CD8-positive, alpha-beta memory T cell (primary cell): ENCODE measurements at regions of chr1 and their contacts with region 1.

Region 1: DNA sequence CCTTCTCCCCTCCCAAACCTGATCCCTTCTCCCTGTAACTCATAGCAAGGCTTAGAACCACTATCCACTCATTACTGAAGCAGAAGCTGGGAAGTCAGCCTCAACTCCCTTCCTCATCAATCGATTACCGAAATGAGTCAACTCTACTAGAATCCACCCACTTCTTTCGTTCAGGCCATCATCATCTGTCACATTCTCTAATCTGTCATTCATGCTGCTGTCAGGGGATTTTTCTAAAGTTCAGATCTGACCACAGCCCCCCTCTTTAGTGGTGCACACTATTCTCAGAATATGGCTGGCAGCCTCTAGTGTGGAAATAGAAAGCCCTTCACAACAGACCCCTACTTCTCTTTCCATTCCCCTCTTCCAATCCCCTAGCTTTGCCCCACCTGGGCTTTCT is 5.1 kb downstream of the NT5C1A start:
- DNase-seq: no peak
- H3K4me3 ChIP-seq: no peak overlapping the region
- H3K4me3 Mint-ChIP-seq: no peak overlapping the region
- H3K27ac ChIP-seq: no peak overlapping the region
- H3K27ac Mint-ChIP-seq: no peak overlapping the region
- H3K4me1 ChIP-seq: no peaks in the 10 kb centered on the region
- H3K4me1 Mint-ChIP-seq: peaks cover 0 to 4% (median 2%) of the 10 kb centered on the region in 3 donors
- H3K27me3 ChIP-seq: peaks cover 17% of the 10 kb centered on the region
- H3K27me3 Mint-ChIP-seq: peaks cover 16 to 33% of the 10 kb centered on the region in 2 donors

Region 2: DNA sequence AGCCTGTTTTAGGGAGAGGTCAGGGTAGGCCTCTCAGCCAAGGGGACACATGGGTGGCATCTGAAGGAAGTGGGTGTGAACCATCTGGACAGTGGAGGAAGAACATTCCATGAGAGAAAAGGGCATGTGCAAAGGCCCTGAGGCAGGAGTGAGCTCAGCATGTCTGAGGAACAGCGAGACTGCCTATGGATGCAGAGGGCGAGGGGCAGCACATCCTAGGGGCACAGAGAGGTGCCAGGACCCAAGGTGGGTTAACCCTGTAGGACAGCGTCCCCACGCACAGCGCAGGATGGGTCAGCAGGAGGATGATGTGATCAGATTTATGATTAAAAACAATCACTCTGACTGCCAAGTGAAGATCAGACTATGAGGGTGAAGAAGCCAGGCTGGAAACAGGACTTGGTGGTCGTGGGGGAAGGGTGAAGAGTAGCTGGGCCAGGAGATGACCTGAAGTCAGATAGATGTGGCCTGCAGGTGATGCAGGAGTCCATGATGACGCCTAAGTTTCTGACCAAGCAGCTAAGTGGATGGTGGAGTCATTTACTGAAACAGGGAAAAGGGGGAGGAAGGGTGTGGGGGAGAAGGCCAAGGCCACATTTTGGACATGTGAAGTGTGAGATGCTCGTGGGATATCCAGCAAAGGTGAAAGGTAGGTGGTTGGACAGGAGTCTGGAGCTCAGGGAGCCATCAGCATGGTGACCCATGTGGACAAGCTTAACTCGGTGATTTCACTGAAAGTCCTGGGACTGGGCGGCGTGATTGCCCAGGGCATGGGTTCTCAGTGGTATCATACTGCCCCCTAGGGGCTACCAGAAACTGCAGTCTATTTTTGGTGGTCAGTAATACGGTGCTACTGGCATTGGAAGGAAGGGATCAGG is 127.9 kb before region 1 on chr1:
- CTCF ChIA-PET with region 1: no interaction called
- POLR2A ChIA-PET with region 1: no interaction called
- DNase-seq: peak; percentile 20 to 52 (median 34)
- H3K4me3 ChIP-seq: no peak overlapping the region
- H3K4me3 Mint-ChIP-seq: no peak overlapping the region
- H3K27ac ChIP-seq: no peak overlapping the region
- H3K27ac Mint-ChIP-seq: peak overlapping the region in 3 of 8 donors; percentile 8 to 70 (median 15)
- H3K4me1 ChIP-seq: no peaks in the 10 kb centered on the region
- H3K4me1 Mint-ChIP-seq: peaks cover 0 to 11% (median 7%) of the 10 kb centered on the region in 3 donors
- H3K27me3 ChIP-seq: no peaks in the 10 kb centered on the region
- H3K27me3 Mint-ChIP-seq: no peaks in the 10 kb centered on the region

Region 3: DNA sequence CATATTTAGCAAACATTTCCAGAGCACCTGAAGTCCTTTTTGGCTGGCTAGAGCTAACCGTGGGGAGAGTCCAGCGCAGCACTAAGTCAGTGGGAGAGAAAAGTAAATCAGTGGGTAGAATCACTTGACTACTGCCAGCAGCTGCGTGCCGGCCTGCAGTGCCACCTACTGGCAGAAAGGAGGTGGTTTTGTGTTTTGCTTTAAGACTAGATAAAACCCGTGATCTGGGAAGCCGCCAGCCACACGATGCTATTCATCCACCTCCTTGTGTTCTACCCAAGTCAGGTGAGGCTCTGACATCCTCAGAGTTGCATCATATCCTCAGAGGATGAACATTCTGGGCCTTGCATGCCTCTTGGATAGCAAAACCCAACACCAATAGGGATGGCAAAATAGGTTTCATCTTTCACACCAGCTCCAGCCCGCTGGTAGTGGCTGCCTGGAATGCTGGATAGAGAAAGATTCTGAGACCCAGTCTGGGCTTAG is 13.2 kb before region 1 on chr1:
- CTCF ChIA-PET with region 1: interaction called, 14 read pairs
- POLR2A ChIA-PET with region 1: no interaction called
- DNase-seq: peak; percentile 52 to 79 (median 61)
- H3K4me3 ChIP-seq: no peak overlapping the region
- H3K4me3 Mint-ChIP-seq: no peak overlapping the region
- H3K27ac ChIP-seq: no peak overlapping the region
- H3K27ac Mint-ChIP-seq: peak overlapping the region in 1 of 8 donors; percentile 25
- H3K4me1 ChIP-seq: no peaks in the 10 kb centered on the region
- H3K4me1 Mint-ChIP-seq: peaks cover 6 to 10% (median 7%) of the 10 kb centered on the region in 3 donors
- H3K27me3 ChIP-seq: peaks cover 6% of the 10 kb centered on the region
- H3K27me3 Mint-ChIP-seq: peaks cover 0 to 9% of the 10 kb centered on the region in 2 donors

Region 4: DNA sequence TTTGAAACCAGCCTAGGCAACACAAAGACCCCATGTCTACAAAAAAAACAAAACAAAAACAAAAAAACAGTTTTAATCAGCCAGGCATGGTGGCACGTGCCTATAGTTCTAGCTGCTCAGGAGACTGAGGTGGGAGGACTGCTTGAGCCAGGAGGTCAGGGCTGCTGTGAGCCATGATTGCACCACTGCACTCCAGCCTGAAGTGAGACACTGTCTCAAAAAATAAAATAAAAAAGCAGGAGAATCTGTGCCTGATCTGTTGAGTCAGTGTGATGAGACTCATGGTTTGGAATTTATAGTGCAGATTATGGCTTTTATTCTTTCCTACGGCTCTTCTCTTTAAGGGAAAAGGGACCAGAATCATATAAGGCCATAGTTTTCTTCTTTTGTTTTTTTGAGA is 200.0 kb after region 1 on chr1:
- CTCF ChIA-PET with region 1: no interaction called
- POLR2A ChIA-PET with region 1: no interaction called
- DNase-seq: no peak
- H3K4me3 ChIP-seq: no peak overlapping the region
- H3K4me3 Mint-ChIP-seq: no peak overlapping the region
- H3K27ac ChIP-seq: no peak overlapping the region
- H3K27ac Mint-ChIP-seq: no peak overlapping the region
- H3K4me1 ChIP-seq: no peaks in the 10 kb centered on the region
- H3K4me1 Mint-ChIP-seq: peaks cover 12 to 23% (median 13%) of the 10 kb centered on the region in 3 donors
- H3K27me3 ChIP-seq: no peaks in the 10 kb centered on the region
- H3K27me3 Mint-ChIP-seq: no peaks in the 10 kb centered on the region